HepG2 (cell line): ENCODE measurements at regions of chr6 and their contacts with region 1.

Region 1: GRCh38 chr6:1311400-1312202 is at the start of gene FOXQ1:
- DNase-seq: peak; percentile 95
- ATAC-seq: peak; percentile 79
- H3K4me3 ChIP-seq: peak within 1 kb of the TSS; percentile 98 to 99 (median 98)
- H3K27ac ChIP-seq: peak within 1 kb of the TSS; percentile 97
- H3K4me1 ChIP-seq: peaks cover 46% of the 10 kb centered on the region
- H3K27me3 ChIP-seq: no peaks in the 10 kb centered on the region; a peak in 1 of 5 replicates
- CTCF ChIP-seq: peak; percentile 50
- EP300 ChIP-seq: peak; percentile 56; a peak in 3 of 4 replicates
- POLR2A ChIP-seq: peak in 1 of 2 experiments; percentile 99; a peak in 2 of 4 replicates
- RAD21 ChIP-seq: peak; percentile 84
- total RNA-seq, gene FOXQ1: 39.2 and 39.8 TPM in 2 replicates

Region 2: GRCh38 chr6:1055015-1055921 is 256.3 kb before region 1 on chr6:
- CTCF ChIA-PET with region 1: no interaction called
- POLR2A ChIA-PET with region 1: interaction called, 150 read pairs
- in situ Hi-C with region 1: loop called (anchors 5 kb)
- intact Hi-C with region 1: loop called (anchors 1 kb)
- DNase-seq: peak; percentile 100
- ATAC-seq: peak; percentile 80
- H3K4me3 ChIP-seq: peak overlapping the region; percentile 33 to 70 (median 42)
- H3K27ac ChIP-seq: peak overlapping the region; percentile 92
- H3K4me1 ChIP-seq: peaks cover 55% of the 10 kb centered on the region
- H3K27me3 ChIP-seq: no peaks in the 10 kb centered on the region
- CTCF ChIP-seq: no peak
- EP300 ChIP-seq: peak; percentile 99 to 100
- POLR2A ChIP-seq: peak; percentile 59 to 71
- RAD21 ChIP-seq: peak; percentile 27; the same call in 1 of the 2 replicates

Region 3: GRCh38 chr6:1131285-1132079 is 180.1 kb before region 1 on chr6:
- CTCF ChIA-PET with region 1: no interaction called
- POLR2A ChIA-PET with region 1: interaction called, 13 read pairs
- in situ Hi-C with region 1: no loop called
- intact Hi-C with region 1: loop called (anchors 5 kb)
- DNase-seq: peak; percentile 92
- ATAC-seq: peak; percentile 98
- H3K4me3 ChIP-seq: no peak overlapping the region
- H3K27ac ChIP-seq: no peak overlapping the region
- H3K4me1 ChIP-seq: peaks cover 25% of the 10 kb centered on the region
- H3K27me3 ChIP-seq: no peaks in the 10 kb centered on the region
- CTCF ChIP-seq: no peak
- EP300 ChIP-seq: peak in 1 of 2 experiments; percentile 41; a peak in 2 of 4 replicates
- POLR2A ChIP-seq: no peak
- RAD21 ChIP-seq: no peak

Region 4: DNA sequence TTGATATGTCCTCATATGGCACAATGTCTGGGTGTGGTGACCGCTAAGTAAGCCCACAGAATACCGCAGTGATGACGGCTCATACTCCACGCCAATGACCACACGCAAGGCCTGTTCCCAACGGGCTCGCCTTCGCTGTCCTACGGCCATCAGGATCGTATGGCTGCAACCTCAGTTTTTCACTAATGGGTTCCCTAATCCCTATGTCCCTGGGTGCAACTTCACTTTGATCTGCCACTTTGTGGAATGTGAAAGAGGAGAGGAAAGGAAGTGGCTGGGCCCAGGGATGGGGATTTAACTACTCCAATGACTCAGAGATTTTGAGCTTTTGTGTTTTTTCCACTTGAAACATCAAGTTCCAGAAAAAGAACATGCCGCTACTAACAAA is 110.9 kb before region 1 on chr6:
- CTCF ChIA-PET with region 1: no interaction called
- POLR2A ChIA-PET with region 1: interaction called, 11 read pairs
- in situ Hi-C with region 1: no loop called
- intact Hi-C with region 1: no loop called
- DNase-seq: peak; percentile 32
- ATAC-seq: no peak
- H3K4me3 ChIP-seq: no peak overlapping the region
- H3K27ac ChIP-seq: no peak overlapping the region
- H3K4me1 ChIP-seq: peaks cover 67% of the 10 kb centered on the region
- H3K27me3 ChIP-seq: no peaks in the 10 kb centered on the region
- CTCF ChIP-seq: no peak
- EP300 ChIP-seq: no peak
- POLR2A ChIP-seq: no peak
- RAD21 ChIP-seq: no peak

Region 5: GRCh38 chr6:1255636-1256365 is 55.8 kb before region 1 on chr6:
- CTCF ChIA-PET with region 1: no interaction called
- POLR2A ChIA-PET with region 1: interaction called, 900 read pairs
- in situ Hi-C with region 1: no loop called
- intact Hi-C with region 1: no loop called
- DNase-seq: no peak
- ATAC-seq: no peak
- H3K4me3 ChIP-seq: no peak overlapping the region
- H3K27ac ChIP-seq: no peak overlapping the region
- H3K4me1 ChIP-seq: peaks cover 40% of the 10 kb centered on the region
- H3K27me3 ChIP-seq: no peaks in the 10 kb centered on the region
- CTCF ChIP-seq: no peak
- EP300 ChIP-seq: no peak
- POLR2A ChIP-seq: no peak
- RAD21 ChIP-seq: no peak

Region 6: DNA sequence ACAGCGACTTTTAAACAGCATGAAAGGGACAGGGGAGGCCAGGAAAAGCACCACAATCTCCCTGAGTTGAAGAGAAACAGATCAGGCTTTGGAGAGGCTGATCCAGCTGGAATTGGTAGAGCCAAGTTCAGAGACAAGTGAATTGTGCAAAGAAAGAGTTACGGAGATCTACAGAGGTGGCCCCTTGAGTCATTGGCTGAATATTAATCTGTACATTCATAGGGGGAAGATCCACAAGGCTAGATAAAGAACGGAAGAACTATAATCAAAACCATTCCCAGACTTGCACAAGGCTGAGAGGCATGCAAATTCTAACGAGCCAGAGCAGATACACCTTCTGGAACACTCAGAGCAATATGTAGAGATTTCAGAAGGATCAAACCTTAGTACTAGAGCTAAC is 13.9 kb before region 1 on chr6:
- CTCF ChIA-PET with region 1: no interaction called
- POLR2A ChIA-PET with region 1: interaction called, 66 read pairs
- in situ Hi-C with region 1: no loop called
- intact Hi-C with region 1: no loop called
- DNase-seq: no peak
- ATAC-seq: no peak
- H3K4me3 ChIP-seq: no peak overlapping the region
- H3K27ac ChIP-seq: no peak overlapping the region
- H3K4me1 ChIP-seq: peaks cover 23% of the 10 kb centered on the region
- H3K27me3 ChIP-seq: no peaks in the 10 kb centered on the region
- CTCF ChIP-seq: no peak
- EP300 ChIP-seq: no peak
- POLR2A ChIP-seq: no peak
- RAD21 ChIP-seq: no peak

Region 7: GRCh38 chr6:1348675-1349074 is 37.1 kb after region 1 on chr6:
- CTCF ChIA-PET with region 1: no interaction called
- POLR2A ChIA-PET with region 1: no interaction called
- in situ Hi-C with region 1: no loop called
- intact Hi-C with region 1: no loop called
- DNase-seq: no peak
- ATAC-seq: no peak
- H3K4me3 ChIP-seq: no peak overlapping the region
- H3K27ac ChIP-seq: no peak overlapping the region
- H3K4me1 ChIP-seq: no peaks in the 10 kb centered on the region
- H3K27me3 ChIP-seq: peaks cover 3 to 4% of the 10 kb centered on the region in 2 experiments; a peak in 2 of 5 replicates
- CTCF ChIP-seq: no peak
- EP300 ChIP-seq: no peak
- POLR2A ChIP-seq: no peak
- RAD21 ChIP-seq: no peak

Region 8: GRCh38 chr6:1379017-1379787 is 67.6 kb after region 1 on chr6:
- CTCF ChIA-PET with region 1: no interaction called
- POLR2A ChIA-PET with region 1: no interaction called
- in situ Hi-C with region 1: no loop called
- intact Hi-C with region 1: no loop called
- DNase-seq: no peak
- ATAC-seq: no peak
- H3K4me3 ChIP-seq: no peak overlapping the region
- H3K27ac ChIP-seq: no peak overlapping the region
- H3K4me1 ChIP-seq: peaks cover 21% of the 10 kb centered on the region; the same call in 1 of the 2 replicates
- H3K27me3 ChIP-seq: peaks cover 32 to 90% of the 10 kb centered on the region in 2 experiments
- CTCF ChIP-seq: no peak
- EP300 ChIP-seq: no peak
- POLR2A ChIP-seq: no peak
- RAD21 ChIP-seq: no peak